ENCODE measurements at regions of chr19 and their contacts with region 1.

Region 1: DNA sequence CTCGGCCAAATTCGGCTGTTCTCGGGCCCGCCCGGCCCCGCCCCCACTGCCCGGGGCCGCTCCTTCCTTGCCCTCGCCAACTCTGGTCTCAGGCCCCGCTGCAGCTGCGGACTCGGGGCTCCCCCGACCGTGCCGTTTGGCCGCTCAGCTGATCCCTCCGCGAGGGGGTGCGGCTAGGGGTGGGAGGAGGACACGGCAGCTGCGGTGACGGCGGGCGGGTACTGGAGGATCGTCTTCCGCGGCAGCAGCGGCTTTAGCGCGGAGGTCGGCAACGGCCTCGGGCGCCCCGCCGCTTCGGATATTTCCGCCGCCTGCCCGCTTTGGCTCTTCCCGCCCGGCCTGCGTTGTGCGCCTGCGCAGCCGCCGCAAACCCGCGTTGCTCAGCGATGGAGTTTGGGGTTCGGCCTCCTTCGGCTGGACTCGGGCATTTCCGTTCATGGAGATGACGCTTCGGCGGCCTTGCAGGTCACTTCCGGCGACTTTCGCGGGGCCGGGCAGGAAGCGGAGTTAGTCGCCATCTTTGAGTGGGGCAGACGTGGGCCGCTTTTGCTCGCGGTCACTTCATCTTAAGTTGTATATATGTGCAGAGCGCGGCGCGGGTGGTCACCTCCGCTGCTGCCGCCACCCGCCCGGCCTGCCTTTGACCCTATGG is 338 bp upstream of the UBE2M start:
- DNase-seq: peak; percentile 100
- H3K4me3 Mint-ChIP-seq: peak overlapping the region; percentile 90
- H3K27ac Mint-ChIP-seq: peak overlapping the region; percentile 100
- H3K4me1 Mint-ChIP-seq: peaks cover 66% of the 10 kb centered on the region
- H3K27me3 Mint-ChIP-seq: no peaks in the 10 kb centered on the region

Region 2: GRCh38 chr19:58212336-58213074 is 346.2 kb before region 1 on chr19:
- CTCF ChIA-PET with region 1: no interaction called
- intact Hi-C with region 1: no loop called
- DNase-seq: no peak
- H3K4me3 Mint-ChIP-seq: no peak overlapping the region
- H3K27ac Mint-ChIP-seq: no peak overlapping the region
- H3K4me1 Mint-ChIP-seq: no peaks in the 10 kb centered on the region
- H3K27me3 Mint-ChIP-seq: no peaks in the 10 kb centered on the region

Region 3: GRCh38 chr19:58513694-58514563 is 44.8 kb before region 1 on chr19:
- CTCF ChIA-PET with region 1: interaction called, 21 read pairs
- intact Hi-C with region 1: loop called (anchors 1 kb)
- DNase-seq: peak; percentile 96
- H3K4me3 Mint-ChIP-seq: peak overlapping the region; percentile 88
- H3K27ac Mint-ChIP-seq: peak overlapping the region; percentile 83
- H3K4me1 Mint-ChIP-seq: peaks cover 36% of the 10 kb centered on the region
- H3K27me3 Mint-ChIP-seq: no peaks in the 10 kb centered on the region

Region 4: DNA sequence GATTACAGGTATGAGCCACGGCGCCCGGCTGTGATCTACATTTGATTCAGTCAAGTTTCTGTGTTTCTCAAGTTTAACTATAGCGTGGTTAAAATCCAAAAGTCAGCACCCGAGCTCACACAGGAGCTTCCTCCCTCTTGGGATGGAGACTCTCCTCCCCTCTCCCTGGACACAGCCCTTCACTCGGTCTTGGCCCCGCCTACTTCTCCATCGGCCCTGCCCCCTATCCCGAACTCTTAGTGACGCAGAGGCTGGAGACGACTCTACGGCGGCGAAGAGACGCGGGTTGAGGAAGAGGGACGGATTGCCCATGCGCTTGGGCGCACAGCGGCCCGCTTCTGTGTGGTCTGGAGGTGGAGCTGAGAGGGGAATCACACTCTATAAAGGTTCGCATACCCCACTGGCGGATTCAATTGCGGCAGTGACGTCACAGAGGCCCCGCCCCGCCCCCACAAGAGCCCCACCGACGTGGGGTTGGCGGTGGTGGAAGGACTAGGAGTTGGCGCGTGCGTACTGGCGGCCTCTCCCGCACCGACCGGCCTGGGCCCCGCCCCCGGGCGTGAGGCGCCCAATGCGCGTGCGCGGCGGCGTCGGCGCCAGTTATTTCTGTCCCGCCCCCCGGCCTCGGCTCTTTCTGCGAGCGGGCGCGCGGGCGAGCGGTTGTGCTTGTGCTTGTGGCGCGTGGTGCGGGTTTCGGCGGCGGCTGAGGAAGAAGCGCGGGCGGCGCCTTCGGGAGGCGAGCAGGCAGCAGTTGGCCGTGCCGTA is 14.7 kb before region 1 on chr19 and contains the start of gene TRIM28:
- CTCF ChIA-PET with region 1: interaction called, 4 read pairs
- intact Hi-C with region 1: loop called (anchors 1 kb)
- DNase-seq: peak; percentile 100
- H3K4me3 Mint-ChIP-seq: peak within 1 kb of the TSS; percentile 97
- H3K27ac Mint-ChIP-seq: peak within 1 kb of the TSS; percentile 97
- H3K4me1 Mint-ChIP-seq: peaks cover 30% of the 10 kb centered on the region
- H3K27me3 Mint-ChIP-seq: peaks cover 15% of the 10 kb centered on the region
- total RNA-seq, gene TRIM28: 475 to 483 TPM

Region 5: GRCh38 chr19:58572818-58573657 is 14.3 kb after region 1 on chr19 and contains the start of gene MZF1:
- CTCF ChIA-PET with region 1: interaction called, 4 read pairs
- intact Hi-C with region 1: loop called (anchors 1 kb)
- DNase-seq: peak; percentile 100
- H3K4me3 Mint-ChIP-seq: peak within 1 kb of the TSS; percentile 96
- H3K27ac Mint-ChIP-seq: peak within 1 kb of the TSS; percentile 99
- H3K4me1 Mint-ChIP-seq: peaks cover 39% of the 10 kb centered on the region
- H3K27me3 Mint-ChIP-seq: no peaks in the 10 kb centered on the region
- total RNA-seq, gene MZF1: 13.3 to 13.4 TPM

Region 6: GRCh38 chr19:58581227-58582151 is 22.7 kb after region 1 on chr19:
- CTCF ChIA-PET with region 1: interaction called, 14 read pairs
- intact Hi-C with region 1: no loop called
- DNase-seq: peak; percentile 98
- H3K4me3 Mint-ChIP-seq: no peak overlapping the region
- H3K27ac Mint-ChIP-seq: peak overlapping the region; percentile 71
- H3K4me1 Mint-ChIP-seq: peaks cover 28% of the 10 kb centered on the region
- H3K27me3 Mint-ChIP-seq: no peaks in the 10 kb centered on the region